ENCODE measurements at regions of chr9 and their contacts with region 1.

Region 1: GRCh38 chr9:126293522-126293889 is 33.1 kb upstream of the MVB12B start:
- DNase-seq: no peak
- H3K4me3 ChIP-seq: no peak overlapping the region
- H3K27ac ChIP-seq: peak overlapping the region in 3 of 59 donors; percentile 17 to 46 (median 22)
- H3K27me3 ChIP-seq: peaks cover 0 to 5% (median 0%) of the 10 kb centered on the region in 45 donors
- CTCF ChIP-seq: peak in 7 of 56 donors; percentile 3 to 26 (median 9)

Region 2: DNA sequence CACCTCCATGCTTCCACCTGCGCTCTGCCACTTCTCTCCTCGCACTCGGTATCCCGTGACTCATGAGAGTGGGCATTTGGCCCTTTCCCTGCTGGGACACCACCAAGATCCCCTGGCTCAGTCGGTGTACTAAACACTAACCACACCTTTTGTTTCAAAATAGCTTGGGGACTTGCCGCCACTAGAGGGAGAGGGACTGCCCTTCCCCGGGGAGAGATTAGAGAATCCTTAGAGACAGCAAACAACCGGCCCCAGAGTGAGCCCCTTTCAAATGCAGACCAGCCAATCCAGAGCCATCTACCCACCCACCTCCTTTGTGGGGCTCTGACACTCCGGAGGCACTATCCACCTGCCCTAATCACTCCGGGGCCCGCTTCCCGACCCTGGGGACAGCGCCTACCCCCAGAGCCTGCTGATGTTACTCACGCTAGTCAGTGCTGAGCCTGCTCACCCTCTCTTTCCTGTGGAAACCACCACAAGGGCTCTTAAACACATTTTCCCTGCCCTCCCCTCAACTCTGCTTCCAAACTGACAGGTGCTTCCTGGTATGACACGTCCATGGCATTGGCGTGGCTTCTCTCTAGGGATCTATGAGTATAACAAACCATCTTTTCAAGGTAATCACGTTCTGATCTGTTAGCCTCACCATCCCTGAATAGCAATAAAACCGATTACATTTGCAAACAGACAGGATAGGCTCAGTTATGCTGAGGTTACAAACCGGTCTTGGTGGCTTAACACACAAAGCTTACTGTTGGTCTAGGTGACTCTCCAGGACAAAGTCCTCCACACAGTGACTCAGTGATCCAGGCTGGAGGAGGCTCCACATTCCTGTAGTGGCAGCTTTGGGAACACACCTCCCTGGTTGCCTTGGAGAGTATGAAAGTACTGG is 147.0 kb before region 1 on chr9:
- intact Hi-C with region 1: loop called in 1 of 2 experiments (anchors 10 kb)
- DNase-seq: peak in 3 of 10 donors; percentile 26 to 40 (median 26)
- H3K4me3 ChIP-seq: no peak overlapping the region
- H3K27ac ChIP-seq: no peak overlapping the region
- H3K27me3 ChIP-seq: peaks cover 0 to 5% (median 0%) of the 10 kb centered on the region in 45 donors
- CTCF ChIP-seq: peak in 37 of 56 donors; percentile 12 to 51 (median 30)

Region 3: DNA sequence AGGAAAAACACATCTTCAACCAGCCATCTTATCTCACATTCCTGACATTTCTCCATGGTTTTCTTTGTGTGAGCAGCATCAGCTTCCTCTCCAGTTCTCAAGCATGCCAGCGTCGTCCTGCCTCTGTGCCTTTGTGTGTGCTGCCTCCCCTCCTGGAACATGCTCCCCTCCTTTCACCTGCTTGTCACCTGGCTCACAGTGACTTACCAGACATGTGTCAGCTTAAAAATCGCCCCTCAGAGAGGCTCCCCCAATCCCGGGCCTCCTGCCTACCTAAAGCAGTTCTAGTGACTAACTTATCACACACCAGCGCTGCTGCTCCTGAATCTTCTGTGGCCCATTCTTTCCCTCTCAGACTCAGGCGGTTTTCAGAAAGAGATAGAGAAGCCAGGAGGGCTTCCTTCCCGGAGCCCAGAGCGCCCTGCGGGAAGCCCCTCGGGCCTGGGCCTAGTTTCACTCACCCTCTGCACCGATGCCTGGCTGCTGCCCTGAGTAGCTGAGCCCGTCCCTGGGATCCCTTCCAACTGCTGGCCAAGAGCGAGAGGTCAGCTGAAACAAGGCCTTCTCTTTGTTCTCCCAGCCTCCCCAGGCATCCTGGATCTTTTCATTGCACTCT is 18.0 kb before region 1 on chr9:
- intact Hi-C with region 1: loop called in 1 of 2 experiments (anchors 2 kb)
- DNase-seq: peak; percentile 21 to 92 (median 86)
- H3K4me3 ChIP-seq: peak overlapping the region in 5 of 59 donors; percentile 8 to 37 (median 20)
- H3K27ac ChIP-seq: peak overlapping the region; percentile 43 to 99 (median 94)
- H3K27me3 ChIP-seq: peaks cover 0 to 2% (median 0%) of the 10 kb centered on the region in 45 donors
- CTCF ChIP-seq: peak in 8 of 56 donors; percentile 5 to 26 (median 18)

Region 4: GRCh38 chr9:126363847-126364671 is 70.6 kb after region 1 on chr9:
- intact Hi-C with region 1: no loop called
- DNase-seq: no peak
- H3K4me3 ChIP-seq: no peak overlapping the region
- H3K27ac ChIP-seq: peak overlapping the region in 57 of 59 donors; percentile 7 to 99 (median 71)
- H3K27me3 ChIP-seq: no peaks in the 10 kb centered on the region
- CTCF ChIP-seq: no peak

Region 5: GRCh38 chr9:127802576-127803443 is 1509.3 kb after region 1 on chr9 and contains the start of gene FPGS:
- intact Hi-C with region 1: no loop called
- DNase-seq: peak; percentile 62 to 90 (median 80)
- H3K4me3 ChIP-seq: peak within 1 kb of the TSS; percentile 53 to 93 (median 83)
- H3K27ac ChIP-seq: peak within 1 kb of the TSS; percentile 32 to 94 (median 88)
- H3K27me3 ChIP-seq: no peaks in the 10 kb centered on the region
- CTCF ChIP-seq: peak in 19 of 56 donors; percentile 3 to 39 (median 16)
- total RNA-seq, gene FPGS: 19.5 to 55.8 (median 36.6) TPM

Measured in dorsolateral prefrontal cortex (tissue), 120 donors.